PC-9 (cell line): ENCODE measurements at regions of chr18 and their contacts with region 1.

Region 1: GRCh38 chr18:54679318-54680149 is 88.5 kb downstream of the DYNAP start:
- DNase-seq: peak; percentile 9 to 76
- H3K4me3 ChIP-seq: no peak overlapping the region
- H3K27ac ChIP-seq: no peak overlapping the region
- H3K4me1 ChIP-seq: peaks cover 7% of the 10 kb centered on the region
- H3K27me3 ChIP-seq: no peaks in the 10 kb centered on the region
- CTCF ChIP-seq: peak; percentile 76

Region 2: DNA sequence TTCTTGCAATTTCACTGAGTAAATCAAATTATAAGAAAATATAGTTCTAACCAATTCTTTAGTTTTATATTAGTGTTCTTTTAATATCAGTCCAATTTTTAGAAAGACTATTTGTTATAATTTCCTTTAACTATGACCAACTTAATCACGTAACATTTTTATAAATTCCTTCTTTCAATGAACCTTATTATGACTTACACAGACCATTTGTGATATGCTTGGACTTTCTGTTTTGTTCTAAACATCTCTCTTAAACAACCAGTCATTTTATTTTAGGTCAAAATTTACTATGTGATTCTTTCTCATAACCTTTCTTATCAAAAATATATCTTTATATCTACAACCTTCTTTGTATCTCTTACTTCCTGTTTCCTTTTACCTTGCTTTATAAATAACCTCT is 127.9 kb before region 1 on chr18:
- CTCF ChIA-PET with region 1: no interaction called
- POLR2A ChIA-PET with region 1: no interaction called
- intact Hi-C with region 1: no loop called
- DNase-seq: no peak
- H3K4me3 ChIP-seq: no peak overlapping the region
- H3K27ac ChIP-seq: no peak overlapping the region
- H3K4me1 ChIP-seq: no peaks in the 10 kb centered on the region
- H3K27me3 ChIP-seq: no peaks in the 10 kb centered on the region
- CTCF ChIP-seq: no peak

Region 3: GRCh38 chr18:54607215-54607934 is 72.2 kb before region 1 on chr18:
- CTCF ChIA-PET with region 1: no interaction called
- POLR2A ChIA-PET with region 1: no interaction called
- intact Hi-C with region 1: no loop called
- DNase-seq: peak; percentile 32 to 97
- H3K4me3 ChIP-seq: peak overlapping the region; percentile 63
- H3K27ac ChIP-seq: peak overlapping the region; percentile 100
- H3K4me1 ChIP-seq: peaks cover 42% of the 10 kb centered on the region
- H3K27me3 ChIP-seq: no peaks in the 10 kb centered on the region
- CTCF ChIP-seq: no peak

Region 4: GRCh38 chr18:54828281-54828881 is 148.8 kb after region 1 on chr18 and contains the start of gene RAB27B:
- CTCF ChIA-PET with region 1: no interaction called
- POLR2A ChIA-PET with region 1: no interaction called
- intact Hi-C with region 1: loop called (anchors 10 kb)
- DNase-seq: peak; percentile 82 to 93
- H3K4me3 ChIP-seq: peak within 1 kb of the TSS; percentile 95
- H3K27ac ChIP-seq: peak within 1 kb of the TSS; percentile 90
- H3K4me1 ChIP-seq: peaks cover 33% of the 10 kb centered on the region
- H3K27me3 ChIP-seq: no peaks in the 10 kb centered on the region
- CTCF ChIP-seq: no peak
- total RNA-seq, gene RAB27B: 9.9 and 12.7 TPM in 2 replicates

Region 5: GRCh38 chr18:54946149-54946581 is 266.6 kb after region 1 on chr18:
- CTCF ChIA-PET with region 1: no interaction called
- POLR2A ChIA-PET with region 1: no interaction called
- intact Hi-C with region 1: loop called (anchors 10 kb)
- DNase-seq: peak; percentile 17 to 86
- H3K4me3 ChIP-seq: peak overlapping the region; percentile 62
- H3K27ac ChIP-seq: peak overlapping the region; percentile 79
- H3K4me1 ChIP-seq: peaks cover 44% of the 10 kb centered on the region
- H3K27me3 ChIP-seq: no peaks in the 10 kb centered on the region
- CTCF ChIP-seq: no peak